ENCODE measurements at regions of chr17 and their contacts with region 1.

Region 1: GRCh38 chr17:28726226-28727130 is at the start of gene TLCD1:
- DNase-seq: peak; percentile 95
- H3K4me3 ChIP-seq: peak within 1 kb of the TSS; percentile 29 to 57 (median 41)
- H3K27ac ChIP-seq: peak within 1 kb of the TSS; percentile 10
- H3K4me1 ChIP-seq: peaks cover 38% of the 10 kb centered on the region
- H3K27me3 ChIP-seq: no peaks in the 10 kb centered on the region
- CTCF ChIP-seq: peak; percentile 98 to 99
- POLR2A ChIP-seq: no peak
- total RNA-seq, gene TLCD1: 1.8 and 2.6 TPM in 2 replicates

Region 2: GRCh38 chr17:28750178-28751047 is 23.9 kb after region 1 on chr17:
- CTCF ChIA-PET with region 1: interaction called, 602 read pairs
- POLR2A ChIA-PET with region 1: interaction called, 45 read pairs
- dilution Hi-C with region 1: no loop called
- intact Hi-C with region 1: loop called (anchors 1 kb)
- DNase-seq: peak; percentile 91
- H3K4me3 ChIP-seq: no peak overlapping the region
- H3K27ac ChIP-seq: no peak overlapping the region
- H3K4me1 ChIP-seq: peaks cover 22% of the 10 kb centered on the region
- H3K27me3 ChIP-seq: no peaks in the 10 kb centered on the region
- CTCF ChIP-seq: peak; percentile 99 to 100
- POLR2A ChIP-seq: no peak

Region 3: GRCh38 chr17:28892024-28892423 is 165.5 kb after region 1 on chr17:
- CTCF ChIA-PET with region 1: interaction called, 19 read pairs
- POLR2A ChIA-PET with region 1: interaction called, 3 read pairs
- dilution Hi-C with region 1: no loop called
- intact Hi-C with region 1: loop called (anchors 2 kb)
- DNase-seq: no peak
- H3K4me3 ChIP-seq: no peak overlapping the region
- H3K27ac ChIP-seq: no peak overlapping the region
- H3K4me1 ChIP-seq: peaks cover 51% of the 10 kb centered on the region
- H3K27me3 ChIP-seq: no peaks in the 10 kb centered on the region
- CTCF ChIP-seq: no peak
- POLR2A ChIP-seq: no peak

Region 4: GRCh38 chr17:28908640-28909167 is 182.2 kb after region 1 on chr17:
- CTCF ChIA-PET with region 1: interaction called, 18 read pairs
- POLR2A ChIA-PET with region 1: interaction called, 7 read pairs
- dilution Hi-C with region 1: no loop called
- intact Hi-C with region 1: loop called (anchors 2 kb)
- DNase-seq: peak; percentile 83
- H3K4me3 ChIP-seq: no peak overlapping the region
- H3K27ac ChIP-seq: peak overlapping the region; percentile 22
- H3K4me1 ChIP-seq: peaks cover 21% of the 10 kb centered on the region
- H3K27me3 ChIP-seq: no peaks in the 10 kb centered on the region
- CTCF ChIP-seq: no peak
- POLR2A ChIP-seq: no peak

Region 5: GRCh38 chr17:28967221-28968140 is 241.0 kb after region 1 on chr17:
- CTCF ChIA-PET with region 1: interaction called, 33 read pairs
- POLR2A ChIA-PET with region 1: no interaction called
- dilution Hi-C with region 1: no loop called
- intact Hi-C with region 1: no loop called
- DNase-seq: no peak
- H3K4me3 ChIP-seq: no peak overlapping the region
- H3K27ac ChIP-seq: no peak overlapping the region
- H3K4me1 ChIP-seq: peaks cover 4% of the 10 kb centered on the region
- H3K27me3 ChIP-seq: no peaks in the 10 kb centered on the region
- CTCF ChIP-seq: no peak
- POLR2A ChIP-seq: no peak